Transverse colon (tissue), 4 donors: ENCODE measurements at regions of chr6 and their contacts with region 1.

Region 1: DNA sequence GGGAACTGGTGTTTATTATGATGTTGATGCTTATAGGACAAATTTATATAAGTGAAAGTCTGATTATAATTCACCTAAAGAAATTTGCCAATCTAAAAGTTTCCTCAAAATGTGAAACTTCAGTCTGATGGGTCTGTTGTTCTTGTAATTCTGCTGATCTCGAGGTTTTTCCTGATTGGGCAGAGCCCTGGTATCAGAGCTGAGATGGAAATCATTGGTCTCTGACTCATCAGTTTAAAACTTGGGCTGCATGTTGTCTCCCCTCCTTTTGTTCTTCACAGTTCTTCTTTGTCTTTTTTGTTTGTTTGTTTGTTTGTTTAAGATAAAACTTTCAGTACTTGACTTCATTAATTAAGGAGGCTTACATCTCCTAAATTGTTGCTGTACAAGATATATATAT is 5.9 kb downstream of the SMAP1 start:
- DNase-seq: no peak
- H3K4me3 ChIP-seq: no peak overlapping the region
- H3K27ac ChIP-seq: no peak overlapping the region
- H3K4me1 ChIP-seq: peaks cover 5 to 52% (median 29%) of the 10 kb centered on the region in 4 donors
- H3K27me3 ChIP-seq: no peaks in the 10 kb centered on the region
- CTCF ChIP-seq: no peak
- EP300 ChIP-seq: no peak
- POLR2A ChIP-seq: no peak

Region 2: GRCh38 chr6:70547313-70547712 is 126.3 kb before region 1 on chr6:
- in situ Hi-C with region 1: loop called in 2 of 4 experiments (anchors 10 to 25 kb)
- intact Hi-C with region 1: no loop called
- DNase-seq: no peak
- H3K4me3 ChIP-seq: no peak overlapping the region
- H3K27ac ChIP-seq: no peak overlapping the region
- H3K4me1 ChIP-seq: no peaks in the 10 kb centered on the region
- H3K27me3 ChIP-seq: no peaks in the 10 kb centered on the region
- CTCF ChIP-seq: peak in 1 of 5 experiments; percentile 13
- EP300 ChIP-seq: no peak
- POLR2A ChIP-seq: no peak

Region 3: DNA sequence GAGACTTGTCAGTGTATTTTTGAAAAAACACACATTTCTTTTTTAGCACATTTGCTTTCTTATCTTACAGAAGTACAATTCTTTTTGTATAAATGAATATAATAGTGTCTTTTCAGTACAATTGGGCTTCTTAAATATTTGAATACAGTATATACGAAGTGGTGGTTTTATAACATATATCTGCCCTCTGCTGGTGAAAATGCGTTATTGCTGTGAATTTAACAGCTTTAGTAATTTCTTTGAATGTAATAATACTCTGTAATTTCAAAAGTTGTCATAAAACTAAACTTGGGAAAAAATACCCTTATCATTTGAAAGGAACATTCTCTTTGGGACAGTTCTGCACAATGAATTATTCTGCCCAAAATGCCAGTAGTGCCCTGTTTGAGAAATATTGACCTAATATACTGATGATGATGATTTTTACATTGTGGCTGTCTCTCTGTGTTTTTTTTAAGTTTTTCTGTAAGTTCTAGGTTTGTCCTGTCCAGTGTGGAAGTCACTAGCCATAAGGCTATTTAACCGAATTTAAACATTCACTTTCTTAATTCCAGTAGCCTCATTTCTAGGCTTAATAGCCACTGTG is 13.0 kb after region 1 on chr6:
- in situ Hi-C with region 1: no loop called
- intact Hi-C with region 1: no loop called
- DNase-seq: no peak
- H3K4me3 ChIP-seq: no peak overlapping the region
- H3K27ac ChIP-seq: no peak overlapping the region
- H3K4me1 ChIP-seq: peaks cover 6 to 31% (median 23%) of the 10 kb centered on the region in 4 donors
- H3K27me3 ChIP-seq: no peaks in the 10 kb centered on the region
- CTCF ChIP-seq: peak; percentile 66 to 86 (median 78)
- EP300 ChIP-seq: no peak
- POLR2A ChIP-seq: no peak